ENCODE measurements at regions of chr2 and their contacts with region 1.

Region 1: DNA sequence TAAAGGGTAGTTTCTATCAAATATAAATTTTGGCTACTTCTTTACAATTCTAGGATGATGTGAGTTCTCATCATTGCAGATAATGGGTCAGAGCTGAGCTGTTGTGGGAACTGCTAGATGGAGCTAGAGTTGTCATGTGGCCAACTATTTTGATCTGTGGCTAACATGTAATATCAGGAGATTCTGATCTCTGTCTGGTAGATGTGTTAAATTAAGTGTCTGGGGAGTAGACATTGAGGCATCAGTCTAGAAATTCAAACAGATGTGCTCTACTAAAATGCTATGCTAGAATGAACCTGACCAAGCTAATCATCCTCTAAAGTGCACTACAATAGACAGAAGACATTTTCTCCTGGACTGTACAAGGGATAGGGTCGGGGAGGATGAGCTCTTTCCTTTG is 30.3 kb upstream of the DARS1 start:
- DNase-seq: no peak
- CTCF ChIP-seq: no peak

Region 2: GRCh38 chr2:135532581-135532980 is 483.1 kb before region 1 on chr2:
- CTCF ChIA-PET with region 1: no interaction called
- POLR2A ChIA-PET with region 1: no interaction called
- DNase-seq: no peak
- CTCF ChIP-seq: no peak

Region 3: GRCh38 chr2:136045835-136046570 is 30.3 kb after region 1 on chr2:
- CTCF ChIA-PET with region 1: no interaction called
- POLR2A ChIA-PET with region 1: no interaction called
- DNase-seq: no peak
- CTCF ChIP-seq: no peak

Region 4: GRCh38 chr2:136057023-136057801 is 41.5 kb after region 1 on chr2:
- CTCF ChIA-PET with region 1: interaction called, 10 read pairs
- POLR2A ChIA-PET with region 1: interaction called, 3 read pairs
- DNase-seq: no peak
- CTCF ChIP-seq: no peak

Region 5: GRCh38 chr2:136085453-136086209 is 69.9 kb after region 1 on chr2:
- CTCF ChIA-PET with region 1: no interaction called
- POLR2A ChIA-PET with region 1: no interaction called
- DNase-seq: no peak
- CTCF ChIP-seq: no peak

Measured in GM10248 (cell line).